PC-3 (cell line): ENCODE measurements at regions of chr9 and their contacts with region 1.

Region 1: DNA sequence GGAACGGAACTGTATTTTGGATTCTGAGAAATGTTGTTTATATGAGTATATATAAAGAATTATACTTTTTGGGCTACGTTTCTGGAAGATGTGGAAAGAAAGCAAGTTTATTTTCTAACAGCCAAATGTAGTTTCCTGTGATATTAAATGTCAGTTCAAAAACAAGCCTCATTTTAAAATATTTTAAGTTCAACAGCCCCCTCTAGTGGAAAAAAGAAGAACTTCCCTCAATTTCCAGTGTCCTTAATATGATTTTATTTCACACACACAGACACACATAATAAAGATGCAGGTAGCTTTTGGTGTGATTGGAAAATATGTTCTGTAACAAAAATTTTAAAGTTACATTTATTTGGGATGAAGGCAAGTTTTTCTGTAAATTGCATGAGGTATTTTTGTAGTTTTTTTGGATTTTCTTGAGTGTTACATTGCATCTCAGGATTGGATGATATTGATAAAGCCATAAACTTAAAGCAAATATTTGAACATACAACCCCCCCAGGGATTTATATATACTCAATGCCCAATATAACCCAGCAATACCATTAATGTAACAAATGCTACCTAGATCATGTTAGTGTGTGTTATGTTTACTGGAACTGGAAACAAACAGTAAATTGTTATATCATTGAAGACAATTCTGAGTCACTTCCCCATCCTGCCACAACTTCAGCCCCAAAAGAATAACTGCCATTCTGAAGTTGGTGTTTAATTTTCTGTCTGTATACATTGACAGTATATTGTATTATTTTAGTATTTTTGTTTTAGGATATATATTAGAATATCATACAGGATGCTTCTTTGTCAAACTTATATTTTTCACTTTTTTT is 54.0 kb downstream of the CCDC171 start:
- DNase-seq: peak; percentile 72
- ATAC-seq: peak; percentile 70
- H3K4me3 ChIP-seq: no peak overlapping the region
- H3K27ac ChIP-seq: no peak overlapping the region
- H3K4me1 ChIP-seq: peaks cover 8% of the 10 kb centered on the region
- H3K27me3 ChIP-seq: no peaks in the 10 kb centered on the region
- CTCF ChIP-seq: peak; percentile 66

Region 2: GRCh38 chr9:15211160-15211814 is 395.6 kb before region 1 on chr9:
- CTCF ChIA-PET with region 1: no interaction called
- POLR2A ChIA-PET with region 1: no interaction called
- intact Hi-C with region 1: loop called (anchors 10 kb)
- DNase-seq: peak; percentile 75
- ATAC-seq: 0 out of 2 replicates have a peak, but pooled peaks have one; percentile 40
- H3K4me3 ChIP-seq: no peak overlapping the region
- H3K27ac ChIP-seq: no peak overlapping the region
- H3K4me1 ChIP-seq: peaks cover 4% of the 10 kb centered on the region; the same call in 1 of the 2 replicates
- H3K27me3 ChIP-seq: no peaks in the 10 kb centered on the region
- CTCF ChIP-seq: peak; percentile 78

Region 3: GRCh38 chr9:15277400-15278090 is 329.3 kb before region 1 on chr9:
- CTCF ChIA-PET with region 1: no interaction called
- POLR2A ChIA-PET with region 1: no interaction called
- intact Hi-C with region 1: loop called (anchors 10 kb)
- DNase-seq: peak; percentile 53
- ATAC-seq: no peak
- H3K4me3 ChIP-seq: no peak overlapping the region
- H3K27ac ChIP-seq: no peak overlapping the region
- H3K4me1 ChIP-seq: no peaks in the 10 kb centered on the region; the same call in 1 of the 2 replicates
- H3K27me3 ChIP-seq: no peaks in the 10 kb centered on the region
- CTCF ChIP-seq: peak; percentile 64

Region 4: DNA sequence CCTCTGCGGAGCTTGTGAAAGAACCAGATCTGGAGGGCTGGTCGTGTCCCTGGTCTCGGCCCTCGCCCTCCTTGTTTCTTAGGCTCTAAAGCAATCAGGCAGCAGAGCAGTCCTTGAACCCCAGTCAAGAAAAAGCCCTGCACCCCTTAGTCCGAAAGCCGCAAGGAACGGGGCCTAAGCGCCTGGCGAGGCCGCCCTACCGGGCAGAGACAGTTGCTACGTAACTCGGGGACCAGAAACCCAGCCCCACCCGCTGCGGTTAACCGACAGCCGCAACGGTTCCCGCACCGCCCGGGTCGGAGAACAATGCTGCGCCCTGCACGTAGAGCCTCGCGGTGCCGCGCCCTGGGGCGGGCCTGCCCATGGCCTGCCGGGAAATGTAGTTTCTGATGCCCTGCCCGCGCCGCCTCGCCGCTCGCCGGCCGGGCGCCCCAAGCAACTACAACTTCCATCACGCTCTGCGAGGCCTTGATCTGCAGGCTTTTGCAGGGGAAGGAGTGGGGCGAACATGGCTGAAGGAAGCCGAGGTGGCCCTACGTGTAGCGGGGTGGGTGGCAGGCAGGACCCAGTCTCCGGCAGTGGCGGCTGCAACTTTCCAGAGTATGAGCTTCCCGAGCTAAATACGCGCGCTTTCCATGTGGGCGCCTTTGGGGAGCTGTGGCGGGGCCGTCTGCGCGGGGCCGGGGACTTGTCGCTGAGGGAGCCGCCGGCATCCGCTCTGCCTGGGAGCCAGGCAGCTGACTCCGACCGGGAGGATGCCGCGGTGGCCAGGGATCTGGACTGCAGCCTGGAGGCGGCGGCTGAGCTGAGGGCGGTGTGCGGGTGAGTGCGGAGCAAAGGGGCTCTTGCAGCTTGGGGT is 184.3 kb before region 1 on chr9 and contains the start of gene SNAPC3:
- CTCF ChIA-PET with region 1: no interaction called
- POLR2A ChIA-PET with region 1: no interaction called
- intact Hi-C with region 1: loop called (anchors 5 kb)
- DNase-seq: peak; percentile 90
- ATAC-seq: peak; percentile 97
- H3K4me3 ChIP-seq: peak within 1 kb of the TSS; percentile 94
- H3K27ac ChIP-seq: peak within 1 kb of the TSS; percentile 48
- H3K4me1 ChIP-seq: peaks cover 16% of the 10 kb centered on the region
- H3K27me3 ChIP-seq: no peaks in the 10 kb centered on the region
- CTCF ChIP-seq: no peak
- total RNA-seq, gene SNAPC3: 25.4 and 34.2 TPM in 2 replicates

Region 5: DNA sequence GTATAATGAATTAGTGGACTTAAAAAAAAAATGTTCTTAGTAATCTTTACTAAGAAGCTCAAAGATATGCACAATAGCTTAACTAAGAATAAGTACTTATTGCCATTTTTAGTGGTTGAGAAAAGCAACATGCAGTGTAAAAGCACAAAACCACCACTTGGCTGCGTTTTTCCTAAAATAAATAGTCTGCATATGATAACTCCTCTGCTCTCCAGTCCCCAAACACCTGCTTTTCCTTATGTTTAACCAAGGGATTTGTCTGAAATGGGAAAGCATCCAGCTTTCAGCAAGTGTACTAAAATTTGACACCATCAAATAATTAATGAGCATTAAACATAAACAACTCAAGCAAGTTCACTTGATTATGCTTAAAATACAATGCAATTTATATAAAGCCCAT is 137.5 kb before region 1 on chr9:
- CTCF ChIA-PET with region 1: no interaction called
- POLR2A ChIA-PET with region 1: no interaction called
- intact Hi-C with region 1: loop called (anchors 5 kb)
- DNase-seq: no peak
- ATAC-seq: no peak
- H3K4me3 ChIP-seq: no peak overlapping the region
- H3K27ac ChIP-seq: no peak overlapping the region
- H3K4me1 ChIP-seq: no peaks in the 10 kb centered on the region
- H3K27me3 ChIP-seq: no peaks in the 10 kb centered on the region
- CTCF ChIP-seq: no peak

Region 6: DNA sequence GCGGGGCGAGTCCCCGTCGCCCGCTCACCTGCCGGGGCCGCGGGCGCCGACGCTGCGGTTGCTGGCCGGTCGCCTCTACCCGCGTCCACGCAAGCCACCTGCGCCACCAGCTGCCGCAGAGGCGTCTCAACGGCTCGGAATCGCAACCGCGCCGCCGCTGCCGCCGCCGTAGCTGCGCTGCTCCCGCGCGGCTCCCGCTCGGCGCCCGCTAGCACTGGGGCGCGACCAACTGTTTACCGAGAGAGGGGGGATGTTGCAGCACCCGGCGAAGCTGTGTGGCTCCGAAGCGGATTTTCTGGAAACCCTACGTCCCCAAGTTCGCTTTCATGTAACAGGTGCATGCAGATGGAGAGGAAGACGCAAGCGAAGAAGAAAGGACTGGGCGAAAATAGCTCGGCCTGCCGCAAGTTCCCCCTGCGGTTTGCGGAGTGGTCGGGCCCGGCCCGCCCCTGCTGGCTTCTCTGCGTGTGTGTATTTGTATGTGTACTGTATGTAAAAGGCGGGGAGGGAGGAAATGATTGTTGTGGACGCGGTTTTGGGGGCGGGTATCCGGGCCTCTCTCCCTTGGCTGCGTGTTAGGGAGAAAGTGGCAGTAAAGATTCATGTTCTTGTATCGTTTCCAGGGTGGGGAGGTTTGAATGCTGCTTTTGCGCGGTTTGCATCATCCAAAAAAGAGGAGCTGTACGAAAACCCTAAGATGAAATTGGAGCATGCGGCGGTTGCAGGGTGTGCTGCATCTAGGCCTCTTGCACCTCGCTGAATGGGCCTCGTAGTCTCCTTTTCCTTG is 95.9 kb before region 1 on chr9 and contains the start of gene PSIP1:
- CTCF ChIA-PET with region 1: no interaction called
- POLR2A ChIA-PET with region 1: no interaction called
- intact Hi-C with region 1: loop called (anchors 5 kb)
- DNase-seq: peak; percentile 65
- ATAC-seq: peak; percentile 79
- H3K4me3 ChIP-seq: peak within 1 kb of the TSS; percentile 83
- H3K27ac ChIP-seq: peak within 1 kb of the TSS; percentile 81
- H3K4me1 ChIP-seq: peaks cover 28% of the 10 kb centered on the region
- H3K27me3 ChIP-seq: no peaks in the 10 kb centered on the region
- CTCF ChIP-seq: no peak
- total RNA-seq, gene PSIP1: 33.2 and 42.9 TPM in 2 replicates

Region 7: GRCh38 chr9:15543047-15543813 is 63.6 kb before region 1 on chr9:
- CTCF ChIA-PET with region 1: no interaction called
- POLR2A ChIA-PET with region 1: no interaction called
- intact Hi-C with region 1: no loop called
- DNase-seq: peak; percentile 82
- ATAC-seq: peak; percentile 97
- H3K4me3 ChIP-seq: peak overlapping the region; percentile 53; the same call in 1 of the 2 replicates
- H3K27ac ChIP-seq: peak overlapping the region; percentile 64
- H3K4me1 ChIP-seq: peaks cover 13% of the 10 kb centered on the region
- H3K27me3 ChIP-seq: no peaks in the 10 kb centered on the region
- CTCF ChIP-seq: no peak

Region 8: GRCh38 chr9:15635752-15636151 is 28.9 kb after region 1 on chr9:
- CTCF ChIA-PET with region 1: no interaction called
- POLR2A ChIA-PET with region 1: no interaction called
- intact Hi-C with region 1: no loop called
- DNase-seq: no peak
- ATAC-seq: no peak
- H3K4me3 ChIP-seq: no peak overlapping the region
- H3K27ac ChIP-seq: no peak overlapping the region
- H3K4me1 ChIP-seq: no peaks in the 10 kb centered on the region
- H3K27me3 ChIP-seq: no peaks in the 10 kb centered on the region
- CTCF ChIP-seq: no peak